ENCODE measurements at regions of chr3 and their contacts with region 1.

Region 1: GRCh38 chr3:128617557-128618397 is 32.8 kb downstream of the RPN1 start:
- DNase-seq: peak; percentile 98 to 99 (median 98)
- H3K4me3 ChIP-seq: peak overlapping the region; percentile 71 to 95 (median 74)
- H3K4me3 Mint-ChIP-seq: peak overlapping the region; percentile 90 to 95
- H3K27ac ChIP-seq: peak overlapping the region; percentile 77 to 89
- H3K27ac Mint-ChIP-seq: peak overlapping the region; percentile 92 to 98 (median 94)
- H3K4me1 ChIP-seq: peaks cover 31 to 37% of the 10 kb centered on the region in 2 donors
- H3K4me1 Mint-ChIP-seq: peaks cover 24% of the 10 kb centered on the region
- H3K27me3 ChIP-seq: no peaks in the 10 kb centered on the region
- H3K27me3 Mint-ChIP-seq: peaks cover 0 to 2% (median 0%) of the 10 kb centered on the region in 3 donors
- CTCF ChIP-seq: peak; percentile 97

Region 2: DNA sequence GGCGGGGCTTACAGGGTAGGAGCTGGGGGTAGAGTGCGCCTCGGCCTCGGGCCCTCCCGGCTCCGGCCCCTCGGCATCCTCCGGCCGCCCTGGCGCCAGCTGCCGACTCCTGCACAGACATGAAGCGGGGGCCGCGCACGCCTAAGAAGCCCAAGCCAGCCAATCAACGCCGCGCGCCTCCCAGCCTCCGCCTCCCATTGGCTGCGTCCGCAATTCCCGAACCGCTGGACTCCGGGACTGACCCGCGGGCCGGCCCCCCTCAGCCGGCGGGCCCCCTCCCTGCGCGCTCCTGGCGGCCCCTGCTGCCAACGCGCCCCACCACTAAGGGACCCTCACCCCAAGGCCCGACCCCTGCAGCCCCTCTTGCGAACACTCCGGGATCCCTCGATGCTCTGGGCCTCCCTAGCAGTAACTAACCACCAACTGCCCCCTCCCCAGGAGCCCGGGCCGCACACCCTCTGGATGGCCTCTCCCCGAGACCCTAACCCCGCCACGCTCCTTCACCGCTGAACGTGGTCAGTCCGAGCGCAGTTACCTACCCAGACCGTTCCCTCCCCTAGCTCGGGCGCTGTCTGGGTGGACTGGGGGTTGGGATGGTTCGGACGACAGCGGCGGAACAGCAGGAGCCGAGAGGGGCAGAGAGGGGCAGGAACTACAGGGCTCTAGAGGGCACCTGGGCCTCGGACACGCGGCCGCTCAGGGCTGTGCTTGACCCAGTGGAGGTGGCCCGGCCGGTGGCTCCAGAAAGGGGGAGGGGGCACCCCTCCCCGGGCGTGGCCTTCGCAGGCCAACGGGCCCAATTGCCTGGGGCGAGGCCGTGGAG is 129.8 kb before region 1 on chr3:
- intact Hi-C with region 1: no loop called
- DNase-seq: peak; percentile 35 to 62 (median 46)
- H3K4me3 ChIP-seq: peak overlapping the region in 2 of 3 experiments; percentile 51 to 78
- H3K4me3 Mint-ChIP-seq: peak overlapping the region; percentile 85 to 97
- H3K27ac ChIP-seq: no peak overlapping the region
- H3K27ac Mint-ChIP-seq: peak overlapping the region in 1 of 7 donors; percentile 69
- H3K4me1 ChIP-seq: peaks cover 57 to 69% of the 10 kb centered on the region in 2 donors
- H3K4me1 Mint-ChIP-seq: peaks cover 55% of the 10 kb centered on the region
- H3K27me3 ChIP-seq: peaks cover 85 to 99% of the 10 kb centered on the region in 2 donors
- H3K27me3 Mint-ChIP-seq: peaks cover 87 to 100% (median 96%) of the 10 kb centered on the region in 3 donors
- CTCF ChIP-seq: no peak

Region 3: DNA sequence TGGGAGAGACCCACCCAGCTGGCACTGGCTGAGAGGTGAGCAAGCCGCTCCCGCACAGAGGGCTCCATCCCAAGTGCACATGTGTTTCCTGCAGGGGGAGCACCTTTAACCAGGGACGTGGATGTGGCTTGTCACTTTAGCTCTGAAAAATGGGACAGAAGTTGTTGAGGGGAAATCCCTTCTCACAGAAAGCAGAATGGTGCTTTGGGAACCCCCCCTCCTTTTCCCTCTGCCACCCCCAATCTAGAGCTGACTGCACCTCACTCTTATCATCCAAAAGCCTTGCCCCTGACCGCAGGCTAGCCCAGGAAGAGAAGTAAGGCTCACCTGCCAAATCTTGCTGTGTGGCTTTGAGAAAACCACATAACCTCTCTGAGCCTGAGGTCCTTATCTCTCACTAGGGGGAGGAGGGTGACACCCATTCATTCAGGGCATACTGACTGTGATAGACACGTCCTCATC is 45.1 kb before region 1 on chr3:
- intact Hi-C with region 1: no loop called
- DNase-seq: peak in 1 of 3 donors; percentile 31
- H3K4me3 ChIP-seq: no peak overlapping the region
- H3K4me3 Mint-ChIP-seq: peak overlapping the region in 1 of 2 donors; percentile 26
- H3K27ac ChIP-seq: no peak overlapping the region
- H3K27ac Mint-ChIP-seq: no peak overlapping the region
- H3K4me1 ChIP-seq: peaks cover 6 to 9% of the 10 kb centered on the region in 2 donors
- H3K4me1 Mint-ChIP-seq: peaks cover 14% of the 10 kb centered on the region
- H3K27me3 ChIP-seq: peaks cover 8 to 20% of the 10 kb centered on the region in 2 donors
- H3K27me3 Mint-ChIP-seq: peaks cover 23 to 39% (median 28%) of the 10 kb centered on the region in 3 donors
- CTCF ChIP-seq: no peak

Region 4: GRCh38 chr3:128650096-128651050 is 32.6 kb after region 1 on chr3 and contains the start of gene RPN1:
- intact Hi-C with region 1: loop called (anchors 2 to 5 kb)
- DNase-seq: peak; percentile 96 to 97 (median 96)
- H3K4me3 ChIP-seq: peak within 1 kb of the TSS; percentile 84 to 98 (median 98)
- H3K4me3 Mint-ChIP-seq: peak within 1 kb of the TSS; percentile 84 to 90
- H3K27ac ChIP-seq: peak within 1 kb of the TSS; percentile 94 to 96
- H3K27ac Mint-ChIP-seq: peak within 1 kb of the TSS; percentile 94 to 99 (median 97)
- H3K4me1 ChIP-seq: peaks cover 28 to 49% of the 10 kb centered on the region in 2 donors
- H3K4me1 Mint-ChIP-seq: peaks cover 49% of the 10 kb centered on the region
- H3K27me3 ChIP-seq: no peaks in the 10 kb centered on the region
- H3K27me3 Mint-ChIP-seq: peaks cover 0 to 2% (median 0%) of the 10 kb centered on the region in 3 donors
- CTCF ChIP-seq: no peak
- polyA plus RNA-seq, gene RPN1: 112 to 375 (median 354) TPM

Region 5: GRCh38 chr3:128794770-128795649 is 177.2 kb after region 1 on chr3:
- intact Hi-C with region 1: loop called (anchors 5 to 10 kb)
- DNase-seq: peak; percentile 57 to 68 (median 57)
- H3K4me3 ChIP-seq: no peak overlapping the region
- H3K4me3 Mint-ChIP-seq: no peak overlapping the region
- H3K27ac ChIP-seq: peak overlapping the region in 1 of 2 donors; percentile 71
- H3K27ac Mint-ChIP-seq: peak overlapping the region; percentile 49 to 83 (median 72)
- H3K4me1 ChIP-seq: peaks cover 8 to 18% of the 10 kb centered on the region in 2 donors
- H3K4me1 Mint-ChIP-seq: peaks cover 38% of the 10 kb centered on the region
- H3K27me3 ChIP-seq: no peaks in the 10 kb centered on the region
- H3K27me3 Mint-ChIP-seq: peaks cover 0 to 1% (median 0%) of the 10 kb centered on the region in 3 donors
- CTCF ChIP-seq: peak; percentile 88

Region 6: DNA sequence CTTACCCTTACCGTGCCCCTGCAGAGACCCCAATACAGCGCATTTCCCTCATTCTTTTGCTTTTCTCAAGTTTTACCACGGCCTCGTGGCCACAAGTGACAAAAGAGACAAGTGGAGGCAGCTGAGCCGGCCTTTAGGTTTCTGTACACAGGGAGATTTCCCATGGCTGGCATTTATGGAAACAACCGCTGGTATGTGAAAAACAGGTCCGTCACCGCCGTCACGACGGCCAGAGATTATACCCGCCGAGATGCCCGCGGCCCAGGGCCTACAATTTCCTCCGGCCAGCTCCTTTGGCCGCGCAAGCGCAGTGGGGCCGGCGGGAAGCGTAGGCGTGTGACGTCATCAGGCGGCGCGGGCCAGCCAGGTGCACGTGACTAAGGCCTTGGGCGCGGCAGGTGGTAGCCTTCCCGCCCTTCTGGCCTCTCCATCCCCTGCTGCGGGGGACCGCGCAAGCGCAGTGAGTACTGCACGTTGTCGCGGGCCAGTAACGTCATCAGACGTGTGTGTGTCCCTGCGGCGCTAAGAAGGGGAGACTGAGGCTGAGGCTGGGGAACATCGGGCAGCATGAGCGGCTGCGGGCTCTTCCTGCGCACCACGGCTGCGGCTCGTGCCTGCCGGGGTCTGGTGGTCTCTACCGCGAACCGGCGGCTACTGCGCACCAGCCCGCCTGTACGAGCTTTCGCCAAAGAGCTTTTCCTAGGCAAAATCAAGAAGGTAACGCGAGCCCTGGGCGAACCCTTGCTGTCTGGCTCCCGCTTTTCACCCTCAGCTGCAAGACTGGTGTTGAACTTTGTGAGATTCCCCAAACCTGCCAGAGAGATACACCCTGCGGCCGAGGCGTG is 261.6 kb after region 1 on chr3 and contains the start of gene ACAD9:
- intact Hi-C with region 1: loop called in 1 of 2 experiments (anchors 5 kb)
- DNase-seq: peak; percentile 97 to 99 (median 97)
- H3K4me3 ChIP-seq: peak within 1 kb of the TSS; percentile 69 to 83 (median 80)
- H3K4me3 Mint-ChIP-seq: peak within 1 kb of the TSS; percentile 87 to 92
- H3K27ac ChIP-seq: peak within 1 kb of the TSS; percentile 96 to 98
- H3K27ac Mint-ChIP-seq: peak within 1 kb of the TSS; percentile 96 to 100 (median 97)
- H3K4me1 ChIP-seq: peaks cover 40 to 55% of the 10 kb centered on the region in 2 donors
- H3K4me1 Mint-ChIP-seq: peaks cover 59% of the 10 kb centered on the region
- H3K27me3 ChIP-seq: no peaks in the 10 kb centered on the region
- H3K27me3 Mint-ChIP-seq: peaks cover 0 to 2% (median 0%) of the 10 kb centered on the region in 3 donors
- CTCF ChIP-seq: no peak
- polyA plus RNA-seq, gene ACAD9: 21.9 to 27.7 (median 25.6) TPM